Transverse colon (tissue), 4 donors: ENCODE measurements at regions of chr5 and their contacts with region 1.

Region 1: GRCh38 chr5:72210888-72211678 is 103.8 kb downstream of the MAP1B start:
- DNase-seq: peak; percentile 23
- H3K4me3 ChIP-seq: no peak overlapping the region
- H3K27ac ChIP-seq: peak overlapping the region in 2 of 4 donors; percentile 23 to 44
- H3K4me1 ChIP-seq: peaks cover 0 to 11% (median 7%) of the 10 kb centered on the region in 4 donors
- H3K27me3 ChIP-seq: no peaks in the 10 kb centered on the region
- CTCF ChIP-seq: no peak
- EP300 ChIP-seq: no peak
- POLR2A ChIP-seq: no peak

Region 2: DNA sequence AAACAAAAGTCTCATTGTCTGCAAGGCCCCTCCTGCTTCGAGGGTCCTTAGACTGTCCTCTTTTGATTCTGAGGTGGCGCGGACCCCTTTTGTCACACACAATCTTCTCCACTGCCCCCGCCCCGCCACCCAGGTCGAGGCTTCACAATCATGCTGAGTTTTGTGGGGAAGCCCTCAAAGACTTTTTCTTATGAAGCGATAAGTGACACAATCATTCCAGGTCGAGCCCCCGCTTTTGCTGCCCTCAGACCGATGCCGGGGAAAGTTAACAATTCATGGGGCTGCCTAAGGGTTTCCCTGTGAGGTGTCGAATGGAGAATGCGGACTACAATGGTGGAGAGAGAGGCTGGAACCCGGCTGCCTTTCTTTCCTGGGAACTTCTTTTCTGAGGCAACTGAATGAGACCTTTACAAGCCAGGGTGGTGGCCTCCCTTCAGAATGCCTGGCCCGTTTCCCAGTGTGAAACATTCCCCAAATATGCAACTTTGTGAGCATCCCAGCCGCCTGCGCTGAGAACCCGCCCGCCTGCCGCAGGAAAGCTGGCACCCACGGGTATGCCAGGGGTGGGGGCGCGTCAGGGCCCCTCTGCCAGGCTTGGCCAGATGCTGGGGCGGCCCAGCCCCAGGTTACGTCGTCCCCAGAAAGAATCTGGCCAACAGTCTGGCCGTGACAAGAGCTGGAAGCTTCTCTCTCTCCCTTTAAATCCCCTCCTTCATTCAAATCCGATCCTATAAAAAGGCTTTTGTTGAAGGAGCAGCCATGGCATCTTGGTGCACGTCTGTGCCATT is 31.9 kb before region 1 on chr5:
- in situ Hi-C with region 1: no loop called
- intact Hi-C with region 1: no loop called
- DNase-seq: peak; percentile 26
- H3K4me3 ChIP-seq: peak overlapping the region in 2 of 4 donors; percentile 4 to 26
- H3K27ac ChIP-seq: peak overlapping the region; percentile 23 to 62 (median 60)
- H3K4me1 ChIP-seq: peaks cover 0 to 7% (median 5%) of the 10 kb centered on the region in 4 donors
- H3K27me3 ChIP-seq: no peaks in the 10 kb centered on the region
- CTCF ChIP-seq: no peak
- EP300 ChIP-seq: no peak
- POLR2A ChIP-seq: no peak

Region 3: DNA sequence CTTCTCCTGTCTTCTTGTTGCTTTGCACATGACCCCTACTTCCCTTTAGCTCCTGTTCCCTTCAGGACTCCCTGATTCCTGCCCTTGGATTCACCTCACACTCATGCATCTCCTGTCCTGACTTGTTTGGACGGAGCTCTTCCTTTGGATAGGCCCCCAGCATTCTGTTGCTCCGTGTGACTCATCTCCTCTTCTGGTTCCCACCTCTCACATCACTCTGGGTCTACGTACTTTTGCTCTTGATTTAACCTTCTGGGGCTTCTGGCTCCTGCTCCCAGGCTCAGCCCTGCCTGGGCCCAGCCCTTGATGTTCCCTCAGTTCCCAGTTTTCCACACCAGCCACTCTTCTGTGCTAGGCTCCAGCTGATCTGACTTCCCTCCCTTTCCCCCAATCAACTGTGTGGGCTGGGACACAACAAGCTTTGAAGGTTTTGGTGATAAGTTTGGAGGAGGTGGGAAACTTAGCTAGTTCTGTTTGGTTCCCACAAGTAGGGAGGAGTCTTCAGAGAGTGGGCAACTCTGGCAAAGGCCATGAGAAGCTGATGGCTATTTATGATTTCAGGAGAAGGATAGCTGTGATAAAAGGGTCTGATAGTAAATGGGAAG is 1746.4 kb after region 1 on chr5:
- in situ Hi-C with region 1: no loop called
- intact Hi-C with region 1: loop called (anchors 5 kb)
- DNase-seq: no peak
- H3K4me3 ChIP-seq: no peak overlapping the region
- H3K27ac ChIP-seq: no peak overlapping the region
- H3K4me1 ChIP-seq: no peaks in the 10 kb centered on the region
- H3K27me3 ChIP-seq: no peaks in the 10 kb centered on the region
- CTCF ChIP-seq: no peak
- EP300 ChIP-seq: no peak
- POLR2A ChIP-seq: no peak